Naive thymus-derived CD8-positive, alpha-beta T cell (primary cell): ENCODE measurements at regions of chr6 and their contacts with region 1.

Region 1: GRCh38 chr6:32971581-32972352 is 3.4 kb downstream of the BRD2 start:
- DNase-seq: peak; percentile 98 to 100 (median 100)
- ATAC-seq: peak; percentile 50 to 68
- H3K4me3 Mint-ChIP-seq: peak overlapping the region; percentile 78 to 99 (median 99)
- H3K27ac Mint-ChIP-seq: peak overlapping the region; percentile 91 to 100 (median 100)
- H3K4me1 Mint-ChIP-seq: peaks cover 30 to 57% (median 44%) of the 10 kb centered on the region in 4 donors
- H3K27me3 Mint-ChIP-seq: peaks cover 0 to 2% (median 0%) of the 10 kb centered on the region in 5 donors

Region 2: GRCh38 chr6:32825966-32826365 is 145.8 kb before region 1 on chr6:
- POLR2A ChIA-PET with region 1: no interaction called
- DNase-seq: no peak
- ATAC-seq: no peak
- H3K4me3 Mint-ChIP-seq: no peak overlapping the region
- H3K27ac Mint-ChIP-seq: peak overlapping the region in 3 of 10 donors; percentile 12 to 38 (median 36)
- H3K4me1 Mint-ChIP-seq: peaks cover 5 to 21% (median 8%) of the 10 kb centered on the region in 4 donors
- H3K27me3 Mint-ChIP-seq: no peaks in the 10 kb centered on the region

Region 3: DNA sequence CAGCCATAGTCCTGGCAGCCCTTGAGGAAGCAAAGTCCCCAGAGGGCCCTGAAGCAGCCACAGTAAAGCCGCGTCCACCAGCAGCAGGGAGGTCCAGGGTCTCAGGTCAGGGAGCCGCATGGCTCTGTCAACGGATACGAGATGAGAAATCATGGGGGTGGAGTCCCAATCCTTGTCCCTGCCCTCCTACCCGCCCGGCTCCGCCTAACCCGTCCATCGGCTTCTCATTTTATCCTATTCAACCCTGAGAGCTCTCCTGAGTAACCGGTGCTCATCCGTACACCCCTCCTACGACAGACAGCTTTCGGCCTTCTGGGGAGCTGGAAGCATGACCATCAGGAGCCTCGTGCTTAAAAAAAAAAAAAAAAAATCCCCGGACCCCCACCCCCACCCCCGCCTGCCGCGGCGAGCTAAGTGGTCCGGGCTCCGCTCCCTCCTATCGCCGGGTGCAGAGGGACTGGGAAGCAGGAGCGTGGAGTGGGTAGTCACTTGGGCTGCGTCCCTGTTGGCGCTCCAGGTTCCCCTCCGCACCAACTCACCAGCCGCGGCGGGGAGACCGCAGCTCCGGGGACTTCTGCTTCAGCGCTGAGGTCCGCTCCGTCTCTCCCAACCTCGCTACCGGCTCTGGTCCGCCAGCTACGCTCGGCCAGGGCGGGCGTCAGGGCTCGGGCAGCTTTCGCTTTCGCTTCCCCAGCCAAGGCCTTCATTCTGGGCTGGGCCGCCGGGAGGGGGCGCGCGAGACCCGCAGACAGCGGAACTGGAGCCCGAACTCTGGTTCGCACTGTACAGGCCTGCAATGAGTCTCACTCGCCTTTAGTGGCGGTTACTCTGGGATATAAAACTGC is 133.4 kb before region 1 on chr6 and contains the start of gene TAP2:
- POLR2A ChIA-PET with region 1: interaction called, 329 read pairs
- DNase-seq: peak; percentile 92 to 99 (median 97)
- ATAC-seq: peak; percentile 87 to 93
- H3K4me3 Mint-ChIP-seq: peak within 1 kb of the TSS; percentile 75 to 99 (median 94)
- H3K27ac Mint-ChIP-seq: peak within 1 kb of the TSS; percentile 84 to 100 (median 98)
- H3K4me1 Mint-ChIP-seq: peaks cover 46 to 92% (median 89%) of the 10 kb centered on the region in 4 donors
- H3K27me3 Mint-ChIP-seq: no peaks in the 10 kb centered on the region
- polyA plus RNA-seq, gene TAP2: 24.2 to 36.6 (median 25.3) TPM

Region 4: GRCh38 chr6:32894080-32895005 is 77.4 kb before region 1 on chr6:
- POLR2A ChIA-PET with region 1: interaction called, 137 read pairs
- DNase-seq: peak; percentile 90 to 98 (median 94)
- ATAC-seq: peak; percentile 97 to 98
- H3K4me3 Mint-ChIP-seq: peak overlapping the region; percentile 97 to 100 (median 99)
- H3K27ac Mint-ChIP-seq: peak overlapping the region; percentile 93 to 98 (median 97)
- H3K4me1 Mint-ChIP-seq: peaks cover 21 to 56% (median 44%) of the 10 kb centered on the region in 4 donors
- H3K27me3 Mint-ChIP-seq: no peaks in the 10 kb centered on the region

Region 5: GRCh38 chr6:32984605-32985389 is 13.0 kb after region 1 on chr6:
- POLR2A ChIA-PET with region 1: interaction called, 232 read pairs
- DNase-seq: peak; percentile 78 to 95 (median 87)
- ATAC-seq: peak; percentile 88 to 99
- H3K4me3 Mint-ChIP-seq: no peak overlapping the region
- H3K27ac Mint-ChIP-seq: peak overlapping the region in 9 of 10 donors; percentile 14 to 84 (median 67)
- H3K4me1 Mint-ChIP-seq: peaks cover 9 to 30% (median 25%) of the 10 kb centered on the region in 4 donors
- H3K27me3 Mint-ChIP-seq: no peaks in the 10 kb centered on the region

Region 6: GRCh38 chr6:33208091-33208967 is 236.6 kb after region 1 on chr6 and contains the start of gene RING1:
- POLR2A ChIA-PET with region 1: interaction called, 16 read pairs
- DNase-seq: peak; percentile 79 to 91 (median 87)
- ATAC-seq: peak; percentile 58 to 69
- H3K4me3 Mint-ChIP-seq: peak within 1 kb of the TSS; percentile 84 to 99 (median 94)
- H3K27ac Mint-ChIP-seq: peak within 1 kb of the TSS; percentile 88 to 98 (median 96)
- H3K4me1 Mint-ChIP-seq: peaks cover 38 to 66% (median 61%) of the 10 kb centered on the region in 4 donors
- H3K27me3 Mint-ChIP-seq: peaks cover 0 to 3% (median 0%) of the 10 kb centered on the region in 5 donors
- polyA plus RNA-seq, gene RING1: 12.1 to 12.5 (median 12.4) TPM

Region 7: GRCh38 chr6:33276864-33277662 is 305.3 kb after region 1 on chr6 and contains the start of gene B3GALT4:
- POLR2A ChIA-PET with region 1: interaction called, 13 read pairs
- DNase-seq: peak; percentile 37 to 78 (median 64)
- ATAC-seq: peak; percentile 72 to 76
- H3K4me3 Mint-ChIP-seq: peak within 1 kb of the TSS; percentile 88 to 96 (median 92)
- H3K27ac Mint-ChIP-seq: peak within 1 kb of the TSS; percentile 72 to 97 (median 94)
- H3K4me1 Mint-ChIP-seq: peaks cover 34 to 80% (median 77%) of the 10 kb centered on the region in 4 donors
- H3K27me3 Mint-ChIP-seq: no peaks in the 10 kb centered on the region
- polyA plus RNA-seq, gene B3GALT4: 14.5 to 20.4 (median 18.7) TPM

Region 8: DNA sequence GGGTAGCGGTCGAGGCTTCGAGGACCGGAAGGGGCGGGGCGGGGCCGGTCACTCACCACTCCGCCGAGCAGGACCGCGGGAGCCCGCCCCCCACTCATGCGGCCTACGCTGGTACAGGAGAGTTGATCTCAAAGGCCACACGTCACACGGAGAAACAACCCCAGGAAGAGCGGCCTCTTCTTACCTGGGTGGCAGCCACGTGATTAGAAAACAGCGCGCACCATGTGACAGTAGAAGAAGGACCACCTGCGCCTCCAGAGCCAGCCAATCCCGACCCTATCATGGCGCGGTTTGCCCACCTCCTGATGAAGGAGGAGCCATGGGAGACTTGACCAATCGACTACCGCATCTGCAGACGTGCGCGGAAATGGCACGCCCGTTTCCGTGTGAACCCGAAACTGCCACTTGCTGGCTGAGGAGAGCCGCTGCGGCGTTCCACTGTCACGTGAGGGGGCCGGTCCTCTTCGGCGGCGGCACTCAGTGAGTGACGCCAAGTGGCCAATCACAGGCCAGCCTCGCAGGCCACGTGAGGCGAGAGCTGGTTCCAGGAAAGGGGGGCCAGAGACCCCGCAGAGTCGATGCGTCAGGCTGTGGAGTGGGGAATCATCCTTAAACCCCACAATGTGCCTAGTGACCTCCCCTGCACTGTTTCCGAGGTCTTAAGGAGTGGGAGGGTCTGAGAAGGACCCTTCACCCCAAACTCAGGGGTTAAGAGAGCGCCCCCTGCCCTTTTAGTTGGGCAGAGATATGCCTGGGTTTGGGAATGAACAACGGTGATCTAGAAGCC is 446.3 kb after region 1 on chr6 and contains the start of gene CUTA:
- POLR2A ChIA-PET with region 1: interaction called, 12 read pairs
- DNase-seq: peak; percentile 93 to 100 (median 99)
- ATAC-seq: peak; percentile 90
- H3K4me3 Mint-ChIP-seq: peak within 1 kb of the TSS; percentile 90 to 95 (median 92)
- H3K27ac Mint-ChIP-seq: peak within 1 kb of the TSS; percentile 98 to 100 (median 99)
- H3K4me1 Mint-ChIP-seq: peaks cover 49 to 94% (median 80%) of the 10 kb centered on the region in 4 donors
- H3K27me3 Mint-ChIP-seq: no peaks in the 10 kb centered on the region
- polyA plus RNA-seq, gene CUTA: 338 to 441 (median 385) TPM

Region 9: DNA sequence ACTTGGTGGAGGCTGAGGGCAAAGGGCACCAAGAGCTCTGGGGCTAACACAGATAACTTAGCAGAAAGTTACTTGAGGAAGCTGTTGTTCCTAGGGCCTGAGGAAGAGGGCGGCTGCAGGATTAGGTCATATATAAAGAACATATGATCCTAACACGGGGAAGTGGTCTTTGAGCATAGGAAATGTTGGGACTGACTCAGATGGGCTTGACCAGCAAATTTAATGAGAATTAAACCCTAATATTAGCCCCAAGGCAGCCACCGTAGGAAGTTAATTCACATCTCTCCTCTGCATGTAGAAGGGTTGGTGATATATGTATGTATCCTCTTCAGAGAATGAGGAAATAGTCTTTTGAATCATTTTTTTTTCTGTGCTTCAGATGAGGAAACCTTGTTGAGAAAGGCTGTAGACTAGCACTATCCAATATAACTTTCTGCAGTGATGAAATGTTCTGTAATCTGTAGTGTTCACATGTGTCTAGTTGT is 473.4 kb after region 1 on chr6:
- POLR2A ChIA-PET with region 1: no interaction called
- DNase-seq: no peak
- ATAC-seq: no peak
- H3K4me3 Mint-ChIP-seq: no peak overlapping the region
- H3K27ac Mint-ChIP-seq: peak overlapping the region in 6 of 10 donors; percentile 9 to 79 (median 42)
- H3K4me1 Mint-ChIP-seq: peaks cover 8 to 44% (median 20%) of the 10 kb centered on the region in 4 donors
- H3K27me3 Mint-ChIP-seq: no peaks in the 10 kb centered on the region